Esophagus muscularis mucosa (tissue), 4 donors: ENCODE measurements at regions of chr2 and their contacts with region 1.

Region 1: GRCh38 chr2:218471982-218472381 is 53.1 kb downstream of the VIL1 start:
- DNase-seq: peak; percentile 79
- H3K4me3 ChIP-seq: no peak overlapping the region
- H3K27ac ChIP-seq: no peak overlapping the region
- H3K4me1 ChIP-seq: peaks cover 0 to 18% (median 10%) of the 10 kb centered on the region in 4 donors
- H3K27me3 ChIP-seq: no peaks in the 10 kb centered on the region
- CTCF ChIP-seq: no peak
- EP300 ChIP-seq: no peak
- POLR2A ChIP-seq: no peak

Region 2: GRCh38 chr2:218186355-218186766 is 285.6 kb before region 1 on chr2:
- intact Hi-C with region 1: loop called (anchors 10 kb)
- DNase-seq: no peak
- H3K4me3 ChIP-seq: no peak overlapping the region
- H3K27ac ChIP-seq: peak overlapping the region in 2 of 4 donors; percentile 59 to 63
- H3K4me1 ChIP-seq: peaks cover 7 to 24% (median 22%) of the 10 kb centered on the region in 4 donors
- H3K27me3 ChIP-seq: no peaks in the 10 kb centered on the region
- CTCF ChIP-seq: peak; percentile 84 to 93 (median 90)
- EP300 ChIP-seq: no peak
- POLR2A ChIP-seq: no peak